ENCODE measurements at regions of chr1 and their contacts with region 1.

Region 1: GRCh38 chr1:23098463-23099170 is 70.0 kb downstream of the LUZP1 start:
- DNase-seq: peak; percentile 58
- H3K4me3 ChIP-seq: no peak overlapping the region
- H3K27ac ChIP-seq: no peak overlapping the region
- H3K27me3 ChIP-seq: no peaks in the 10 kb centered on the region
- CTCF ChIP-seq: peak; percentile 98

Region 2: GRCh38 chr1:23118957-23119792 is 20.6 kb after region 1 on chr1:
- CTCF ChIA-PET with region 1: interaction called, 10 read pairs
- POLR2A ChIA-PET with region 1: no interaction called
- DNase-seq: no peak
- H3K4me3 ChIP-seq: no peak overlapping the region
- H3K27ac ChIP-seq: no peak overlapping the region
- H3K27me3 ChIP-seq: no peaks in the 10 kb centered on the region
- CTCF ChIP-seq: no peak

Region 3: GRCh38 chr1:23132033-23132432 is 33.4 kb after region 1 on chr1:
- CTCF ChIA-PET with region 1: interaction called, 19 read pairs
- POLR2A ChIA-PET with region 1: interaction called, 3 read pairs
- DNase-seq: no peak
- H3K4me3 ChIP-seq: no peak overlapping the region
- H3K27ac ChIP-seq: no peak overlapping the region
- H3K27me3 ChIP-seq: no peaks in the 10 kb centered on the region
- CTCF ChIP-seq: no peak

Region 4: DNA sequence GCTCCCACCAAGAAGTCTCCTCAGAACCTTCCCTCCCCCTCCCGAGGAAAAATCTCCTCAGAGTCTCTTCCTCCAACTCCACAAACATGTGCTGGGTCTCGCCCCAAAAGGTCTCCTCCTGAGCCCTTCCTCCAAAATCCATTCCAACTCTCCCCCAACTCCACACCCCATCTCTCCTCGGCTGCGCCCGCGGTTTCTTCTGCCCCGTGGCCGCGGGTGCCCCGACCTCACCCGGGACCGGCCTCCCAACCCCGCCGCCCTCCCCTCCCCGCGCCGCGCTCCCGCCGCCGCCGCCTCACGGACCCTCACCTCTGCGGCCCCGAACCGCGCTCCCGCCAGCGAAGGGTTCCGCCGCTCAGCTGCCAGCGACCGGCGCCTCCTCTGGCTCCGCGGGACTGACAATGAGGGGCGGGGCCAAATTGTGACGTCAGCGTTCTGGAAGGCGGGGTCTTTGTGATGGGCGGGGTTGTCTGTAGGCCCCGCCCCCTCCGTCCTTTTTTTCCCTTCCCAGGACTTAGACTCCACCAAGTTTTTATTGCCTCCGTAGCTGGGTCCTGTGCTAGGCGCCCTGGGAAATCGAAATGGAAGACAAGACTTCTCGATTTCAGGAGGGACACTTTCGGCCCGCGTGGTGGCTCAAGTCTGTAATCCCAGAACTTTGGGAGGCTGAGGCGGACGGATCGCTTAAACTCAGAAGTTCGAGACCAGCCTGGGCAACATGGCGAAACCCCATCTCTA is 70.0 kb after region 1 on chr1 and contains the start of gene LUZP1:
- CTCF ChIA-PET with region 1: interaction called, 11 read pairs
- POLR2A ChIA-PET with region 1: interaction called, 18 read pairs
- DNase-seq: no peak
- H3K4me3 ChIP-seq: peak within 1 kb of the TSS; percentile 83
- H3K27ac ChIP-seq: peak within 1 kb of the TSS; percentile 91
- H3K27me3 ChIP-seq: no peaks in the 10 kb centered on the region
- CTCF ChIP-seq: no peak
- polyA plus RNA-seq, gene LUZP1: 32.4 and 39.4 TPM in 2 replicates

Region 5: GRCh38 chr1:23177438-23178380 is 79.1 kb after region 1 on chr1:
- CTCF ChIA-PET with region 1: interaction called, 303 read pairs
- POLR2A ChIA-PET with region 1: interaction called, 7 read pairs
- DNase-seq: no peak
- H3K4me3 ChIP-seq: peak overlapping the region; percentile 62
- H3K27ac ChIP-seq: peak overlapping the region; percentile 79
- H3K27me3 ChIP-seq: no peaks in the 10 kb centered on the region
- CTCF ChIP-seq: no peak

Measured in AG04450 (cell line).